CD8-positive, alpha-beta T cell (primary cell): ENCODE measurements at regions of chr2 and their contacts with region 1.

Region 1: DNA sequence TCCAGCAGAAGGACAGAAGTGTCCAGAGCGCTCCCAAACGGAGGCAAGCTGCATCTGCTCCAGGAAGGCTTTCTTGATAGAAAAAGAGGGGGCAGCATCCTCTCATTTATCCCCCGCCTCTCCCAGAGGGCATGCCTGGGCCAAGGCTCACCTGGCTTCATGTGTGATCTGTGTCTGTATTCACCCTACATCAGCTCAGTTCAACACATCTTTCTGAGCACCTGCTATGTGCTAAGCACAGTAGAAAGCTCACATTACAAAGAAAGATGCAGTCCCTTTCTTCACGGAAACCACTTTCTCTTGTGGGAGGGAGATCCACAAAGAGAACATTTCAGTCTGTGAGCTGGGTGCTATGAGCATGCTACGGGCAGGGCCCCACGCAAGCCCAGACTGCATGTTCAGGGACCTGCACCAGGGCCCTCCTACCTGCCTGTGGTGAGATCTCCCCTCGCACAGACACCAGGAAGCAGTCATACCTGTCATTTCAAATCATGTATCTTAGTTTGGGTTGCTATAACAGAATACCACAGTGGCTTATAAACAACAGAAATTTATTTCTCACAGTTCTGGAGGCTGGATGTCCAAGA is 90.7 kb downstream of the PDCL3 start:
- DNase-seq: peak in 7 of 9 experiments; percentile 11 to 85 (median 66)
- ATAC-seq: peak; percentile 95
- H3K4me3 ChIP-seq: no peak overlapping the region
- H3K4me3 Mint-ChIP-seq: peak overlapping the region; percentile 49
- H3K27ac ChIP-seq: peak overlapping the region; percentile 10 to 35
- H3K27ac Mint-ChIP-seq: peak overlapping the region; percentile 81
- H3K4me1 ChIP-seq: peaks cover 43% of the 10 kb centered on the region
- H3K4me1 Mint-ChIP-seq: peaks cover 55% of the 10 kb centered on the region
- H3K27me3 ChIP-seq: peaks cover 0 to 3% of the 10 kb centered on the region in 2 experiments
- H3K27me3 Mint-ChIP-seq: no peaks in the 10 kb centered on the region
- CTCF ChIP-seq: no peak

Region 2: GRCh38 chr2:100580367-100581276 is 72.9 kb before region 1 on chr2:
- CTCF ChIA-PET with region 1: no interaction called
- POLR2A ChIA-PET with region 1: no interaction called
- intact Hi-C with region 1: no loop called
- DNase-seq: peak; percentile 37 to 91 (median 65)
- ATAC-seq: peak; percentile 77
- H3K4me3 ChIP-seq: peak overlapping the region; percentile 27 to 34
- H3K4me3 Mint-ChIP-seq: peak overlapping the region; percentile 68
- H3K27ac ChIP-seq: peak overlapping the region; percentile 75 to 87
- H3K27ac Mint-ChIP-seq: peak overlapping the region; percentile 99
- H3K4me1 ChIP-seq: peaks cover 35% of the 10 kb centered on the region
- H3K4me1 Mint-ChIP-seq: peaks cover 39% of the 10 kb centered on the region
- H3K27me3 ChIP-seq: no peaks in the 10 kb centered on the region
- H3K27me3 Mint-ChIP-seq: no peaks in the 10 kb centered on the region
- CTCF ChIP-seq: no peak

Region 3: GRCh38 chr2:100813527-100813926 is 160.0 kb after region 1 on chr2:
- CTCF ChIA-PET with region 1: no interaction called
- POLR2A ChIA-PET with region 1: no interaction called
- intact Hi-C with region 1: loop called (anchors 5 to 10 kb)
- DNase-seq: peak in 1 of 9 experiments; percentile 25
- ATAC-seq: peak; percentile 51
- H3K4me3 ChIP-seq: no peak overlapping the region
- H3K4me3 Mint-ChIP-seq: no peak overlapping the region
- H3K27ac ChIP-seq: no peak overlapping the region
- H3K27ac Mint-ChIP-seq: peak overlapping the region; percentile 39
- H3K4me1 ChIP-seq: peaks cover 37% of the 10 kb centered on the region
- H3K4me1 Mint-ChIP-seq: peaks cover 41% of the 10 kb centered on the region
- H3K27me3 ChIP-seq: no peaks in the 10 kb centered on the region
- H3K27me3 Mint-ChIP-seq: no peaks in the 10 kb centered on the region
- CTCF ChIP-seq: no peak

Region 4: GRCh38 chr2:100818606-100819369 is 165.2 kb after region 1 on chr2:
- CTCF ChIA-PET with region 1: no interaction called
- POLR2A ChIA-PET with region 1: no interaction called
- intact Hi-C with region 1: loop called (anchors 5 to 10 kb)
- DNase-seq: peak in 4 of 9 experiments; percentile 15 to 54 (median 21)
- ATAC-seq: peak; percentile 16
- H3K4me3 ChIP-seq: peak overlapping the region; percentile 34 to 49
- H3K4me3 Mint-ChIP-seq: peak overlapping the region; percentile 81
- H3K27ac ChIP-seq: no peak overlapping the region
- H3K27ac Mint-ChIP-seq: peak overlapping the region; percentile 43
- H3K4me1 ChIP-seq: peaks cover 23% of the 10 kb centered on the region
- H3K4me1 Mint-ChIP-seq: peaks cover 39% of the 10 kb centered on the region
- H3K27me3 ChIP-seq: no peaks in the 10 kb centered on the region
- H3K27me3 Mint-ChIP-seq: peaks cover 6% of the 10 kb centered on the region
- CTCF ChIP-seq: no peak